Heart left ventricle (tissue), 16 donors: ENCODE measurements at regions of chr11 and their contacts with region 1.

Region 1: GRCh38 chr11:68610452-68611116 is 73.8 kb upstream of the GAL start:
- DNase-seq: no peak
- ATAC-seq: no peak
- H3K4me3 ChIP-seq: no peak overlapping the region
- H3K27ac ChIP-seq: no peak overlapping the region
- H3K4me1 ChIP-seq: no peaks in the 10 kb centered on the region
- H3K27me3 ChIP-seq: no peaks in the 10 kb centered on the region
- CTCF ChIP-seq: peak in 6 of 12 donors; percentile 9 to 33 (median 22)
- POLR2A ChIP-seq: no peak

Region 2: DNA sequence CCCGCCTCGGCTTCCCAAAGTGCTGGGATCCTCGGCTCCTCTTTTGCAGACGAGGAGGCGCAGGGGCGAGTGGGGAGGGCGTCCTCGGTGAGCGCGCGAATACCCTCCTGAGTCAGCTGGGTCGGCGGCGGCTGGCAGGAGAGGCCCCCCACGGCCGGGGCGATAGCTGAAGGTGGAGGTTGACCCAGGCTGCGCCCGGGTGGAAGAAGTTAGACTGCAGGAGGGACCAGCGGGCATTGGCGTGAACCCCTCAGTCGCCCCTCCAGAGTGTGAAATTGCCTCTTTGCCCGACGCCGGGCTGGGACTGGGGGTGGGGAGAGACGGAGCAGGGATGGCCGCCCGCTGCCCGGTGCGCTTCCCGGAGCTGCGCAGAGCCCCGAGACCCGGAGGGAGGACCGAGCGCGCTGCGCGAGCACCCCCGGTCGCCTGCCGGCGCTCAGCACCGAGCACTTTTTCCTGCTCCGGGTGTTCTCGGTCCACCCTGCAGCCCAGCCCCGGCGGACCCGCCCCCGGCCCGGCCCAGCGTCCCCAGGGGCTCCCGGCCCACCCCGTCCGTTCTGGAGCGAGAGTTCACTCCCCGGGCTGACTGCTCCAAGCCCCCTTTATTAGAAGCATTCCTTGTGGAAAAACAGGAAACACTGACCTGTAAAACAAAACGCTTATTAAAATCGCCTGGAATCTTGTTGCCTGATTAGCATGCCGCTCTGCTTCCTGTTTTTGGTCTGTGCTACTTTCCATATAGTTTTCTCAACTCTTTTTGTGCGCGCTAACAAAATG is 244.8 kb after region 1 on chr11:
- intact Hi-C with region 1: loop called in 4 of 10 experiments (anchors 10 kb)
- DNase-seq: peak; percentile 59 to 92 (median 68)
- ATAC-seq: peak; percentile 43 to 83 (median 81)
- H3K4me3 ChIP-seq: peak overlapping the region; percentile 41 to 66 (median 58)
- H3K27ac ChIP-seq: peak overlapping the region in 11 of 12 donors; percentile 40 to 77 (median 68)
- H3K4me1 ChIP-seq: peaks cover 0 to 24% (median 9%) of the 10 kb centered on the region in 12 donors
- H3K27me3 ChIP-seq: peaks cover 0 to 10% (median 0%) of the 10 kb centered on the region in 9 donors
- CTCF ChIP-seq: peak in 5 of 12 donors; percentile 14 to 65 (median 53)
- POLR2A ChIP-seq: peak in 1 of 2 donors; percentile 39

Region 3: DNA sequence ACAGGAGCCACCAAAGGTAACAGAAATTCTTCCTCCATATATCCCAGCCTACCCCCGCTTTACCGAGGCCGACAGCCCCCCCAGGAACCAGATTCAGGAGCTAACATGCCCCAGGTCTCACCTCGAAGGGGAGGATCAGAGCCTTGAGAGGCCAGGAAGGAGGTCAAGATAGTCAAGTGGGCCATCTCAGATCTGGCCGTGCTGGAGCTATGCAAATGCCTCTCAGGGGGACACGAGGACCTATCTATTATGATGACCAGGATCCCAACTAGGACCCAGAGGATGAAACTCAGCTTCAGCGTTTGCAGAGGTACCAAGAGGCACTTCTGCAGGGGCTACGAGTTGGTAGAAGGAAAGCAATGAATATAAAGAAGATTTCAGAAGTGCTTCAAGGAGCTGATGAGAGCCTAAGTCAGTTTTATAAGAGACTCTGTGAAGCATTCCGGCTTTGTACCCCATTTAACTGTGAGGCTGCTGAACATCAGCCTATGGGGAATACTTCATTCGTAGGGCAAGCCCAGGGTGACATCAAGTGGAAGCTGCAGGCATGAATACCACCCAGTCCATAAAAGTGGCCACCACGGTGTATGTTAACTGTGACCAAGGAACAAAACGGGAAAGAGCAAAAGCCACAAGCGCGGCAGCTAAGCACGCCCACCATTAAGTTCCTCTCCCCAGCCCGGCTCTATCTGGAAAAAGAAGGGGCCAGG is 258.8 kb after region 1 on chr11:
- intact Hi-C with region 1: loop called in 2 of 10 experiments (anchors 10 kb)
- DNase-seq: peak in 1 of 5 donors; percentile 32
- ATAC-seq: peak; percentile 69 to 80 (median 74)
- H3K4me3 ChIP-seq: peak overlapping the region; percentile 2 to 72 (median 52)
- H3K27ac ChIP-seq: peak overlapping the region in 6 of 12 donors; percentile 20 to 56 (median 47)
- H3K4me1 ChIP-seq: peaks cover 0 to 33% (median 15%) of the 10 kb centered on the region in 12 donors
- H3K27me3 ChIP-seq: no peaks in the 10 kb centered on the region
- CTCF ChIP-seq: peak in 8 of 12 donors; percentile 13 to 49 (median 25)
- POLR2A ChIP-seq: no peak